Naive thymus-derived CD4-positive, alpha-beta T cell (primary cell): ENCODE measurements at regions of chr11 and their contacts with region 1.

Region 1: DNA sequence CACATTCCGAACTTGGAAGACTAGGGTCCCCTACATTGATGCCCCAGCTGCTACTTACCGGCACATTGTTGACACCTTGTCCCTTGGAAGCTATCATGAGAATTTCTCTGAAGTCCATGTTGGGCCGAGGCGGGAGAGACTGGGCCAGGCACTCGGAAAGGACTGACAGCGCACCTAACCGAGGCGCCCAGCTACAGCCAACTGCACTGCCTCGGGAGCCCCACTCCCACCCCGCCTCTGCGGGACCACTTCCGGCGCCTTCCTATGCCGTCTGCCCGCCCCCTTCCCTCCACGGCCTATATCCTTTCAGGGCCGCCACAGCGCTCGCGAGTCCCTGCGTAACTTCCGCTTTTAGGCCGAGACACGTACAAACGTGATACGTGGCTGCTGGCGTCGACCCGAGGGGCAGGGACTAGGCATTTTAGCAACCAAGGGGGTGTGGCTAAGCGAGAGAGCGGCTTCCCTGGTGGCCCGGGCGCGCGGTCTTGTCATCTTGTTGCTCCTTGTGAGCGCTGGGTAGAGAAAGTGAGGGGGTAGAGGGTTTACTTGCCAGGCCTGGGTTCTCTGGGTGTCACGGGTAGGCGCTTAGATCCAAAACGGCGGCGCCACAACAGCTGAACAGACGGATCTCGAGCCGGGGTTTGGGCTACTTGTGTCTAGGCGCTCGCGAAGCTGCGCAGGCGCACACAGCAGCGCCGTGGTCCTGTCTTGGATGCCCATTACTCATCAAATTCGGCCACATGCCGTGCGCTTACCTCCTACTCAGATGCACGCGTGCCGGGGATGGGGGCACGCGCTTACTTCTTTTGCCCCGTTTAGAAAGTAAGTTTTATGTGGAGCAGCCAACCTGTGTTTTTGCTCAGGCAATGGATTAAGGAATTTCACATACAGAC is at the start of gene SPTY2D1:
- DNase-seq: peak; percentile 88 to 99 (median 98)
- ATAC-seq: peak; percentile 97
- H3K4me3 ChIP-seq: peak within 1 kb of the TSS; percentile 98
- H3K4me3 Mint-ChIP-seq: peak within 1 kb of the TSS; percentile 83 to 99 (median 96)
- H3K27ac ChIP-seq: peak within 1 kb of the TSS; percentile 98
- H3K27ac Mint-ChIP-seq: peak within 1 kb of the TSS; percentile 95 to 100 (median 98)
- H3K4me1 ChIP-seq: peaks cover 10 to 17% of the 10 kb centered on the region in 2 donors
- H3K4me1 Mint-ChIP-seq: peaks cover 6 to 58% (median 32%) of the 10 kb centered on the region in 7 donors
- H3K27me3 ChIP-seq: no peaks in the 10 kb centered on the region
- H3K27me3 Mint-ChIP-seq: peaks cover 0 to 7% (median 0%) of the 10 kb centered on the region in 5 donors
- total RNA-seq, gene SPTY2D1: 26.0 to 37.4 (median 28.2) TPM

Region 2: DNA sequence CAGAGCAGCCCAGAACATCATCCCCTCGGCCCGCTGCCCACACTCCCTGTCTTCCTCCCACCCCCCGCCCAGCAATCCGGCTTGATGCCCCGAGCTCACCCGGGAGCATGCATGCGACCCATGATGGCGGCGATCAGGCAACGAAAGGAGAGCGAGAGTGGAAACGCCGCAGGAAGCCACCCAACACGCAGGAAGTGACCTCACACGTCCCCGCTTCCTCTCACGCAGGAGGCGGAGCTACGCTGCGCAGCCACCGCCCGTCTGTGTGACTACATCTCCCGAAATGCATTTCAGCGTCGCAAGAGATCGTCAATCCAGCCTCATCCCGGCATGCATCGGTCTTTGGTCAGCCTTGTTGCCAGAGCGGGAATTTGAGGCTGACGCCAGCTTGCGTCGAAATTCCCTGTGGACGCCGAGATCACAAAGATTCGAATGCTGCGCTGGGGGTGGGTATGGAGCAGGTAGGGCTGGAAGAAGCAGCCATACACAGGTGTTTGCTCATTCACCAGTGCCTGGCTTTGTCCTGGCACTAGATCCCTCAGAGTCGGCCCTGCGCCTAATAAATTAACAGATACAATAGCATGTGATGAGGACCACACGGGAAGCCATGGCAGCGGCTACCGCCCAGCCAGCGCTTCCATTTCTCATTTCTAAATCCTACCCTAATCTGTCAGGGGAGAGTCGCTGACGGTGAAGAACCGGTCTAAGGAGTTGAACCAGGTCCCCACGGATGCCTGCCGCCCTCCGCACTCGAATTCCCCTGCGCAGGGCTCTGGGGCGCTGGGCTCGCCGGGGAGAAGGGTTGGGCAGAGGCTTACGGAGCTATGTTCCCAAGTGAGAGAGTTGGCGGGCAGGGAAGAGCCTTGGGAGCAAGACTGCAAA is 1556.6 kb before region 1 on chr11 and contains the start of gene RPS13:
- CTCF ChIA-PET with region 1: no interaction called
- POLR2A ChIA-PET with region 1: no interaction called
- intact Hi-C with region 1: loop called in 1 of 2 experiments (anchors 5 kb)
- DNase-seq: peak; percentile 76 to 95 (median 93)
- ATAC-seq: peak; percentile 98
- H3K4me3 ChIP-seq: peak within 1 kb of the TSS; percentile 87
- H3K4me3 Mint-ChIP-seq: peak within 1 kb of the TSS; percentile 91 to 99 (median 98)
- H3K27ac ChIP-seq: peak within 1 kb of the TSS; percentile 91
- H3K27ac Mint-ChIP-seq: peak within 1 kb of the TSS; percentile 96 to 99 (median 99)
- H3K4me1 ChIP-seq: peaks cover 12 to 27% of the 10 kb centered on the region in 2 donors
- H3K4me1 Mint-ChIP-seq: peaks cover 25 to 60% (median 37%) of the 10 kb centered on the region in 7 donors
- H3K27me3 ChIP-seq: no peaks in the 10 kb centered on the region
- H3K27me3 Mint-ChIP-seq: no peaks in the 10 kb centered on the region
- total RNA-seq, gene RPS13: 1,062 to 2,591 (median 2,234) TPM

Region 3: DNA sequence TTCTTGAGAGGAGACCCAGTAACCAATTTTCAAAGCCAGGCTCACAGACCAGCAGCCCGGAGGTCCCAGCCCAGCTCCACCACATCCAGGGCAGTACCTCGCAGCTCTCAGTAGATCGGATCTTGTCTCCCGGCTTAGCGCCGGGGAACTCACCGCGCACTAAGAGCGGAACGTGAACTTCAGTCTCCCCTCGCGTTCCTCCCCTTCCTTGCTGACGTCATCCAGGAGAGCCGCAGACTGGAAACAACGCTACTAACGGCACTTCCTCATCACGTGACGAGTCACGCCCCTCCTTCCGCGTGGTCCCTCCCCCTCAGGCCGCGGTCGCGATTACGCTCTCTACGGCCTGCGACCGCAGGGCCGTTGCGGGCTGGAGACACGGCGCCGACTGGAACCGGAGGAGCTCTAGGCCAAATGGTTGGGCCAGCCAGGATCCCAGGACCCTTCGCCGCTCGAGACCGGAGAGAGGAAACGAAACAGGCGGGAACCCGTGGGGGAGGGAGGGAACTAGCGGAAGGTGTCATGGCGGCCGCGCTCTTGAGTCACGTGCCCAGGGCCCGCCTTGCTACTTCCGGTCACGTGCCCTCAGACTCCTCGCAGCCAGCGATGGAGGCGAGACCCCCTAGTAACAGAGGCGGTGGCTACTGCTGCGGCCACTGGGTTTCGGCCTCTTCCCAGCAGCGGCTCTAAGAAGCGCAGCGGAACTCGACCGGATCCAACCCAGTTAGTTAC is 312.2 kb before region 1 on chr11 and contains the starts of genes GTF2H1 and HPS5:
- CTCF ChIA-PET with region 1: no interaction called
- POLR2A ChIA-PET with region 1: interaction called, 15 read pairs
- intact Hi-C with region 1: loop called (anchors 1 kb)
- DNase-seq: peak; percentile 88 to 99 (median 98)
- ATAC-seq: peak; percentile 93
- H3K4me3 ChIP-seq: peak within 1 kb of the TSS; percentile 96
- H3K4me3 Mint-ChIP-seq: peak within 1 kb of the TSS; percentile 85 to 100 (median 94)
- H3K27ac ChIP-seq: peak within 1 kb of the TSS; percentile 97
- H3K27ac Mint-ChIP-seq: peak within 1 kb of the TSS; percentile 99 to 100 (median 100)
- H3K4me1 ChIP-seq: peaks cover 32 to 33% of the 10 kb centered on the region in 2 donors
- H3K4me1 Mint-ChIP-seq: peaks cover 53 to 91% (median 81%) of the 10 kb centered on the region in 7 donors
- H3K27me3 ChIP-seq: no peaks in the 10 kb centered on the region
- H3K27me3 Mint-ChIP-seq: peaks cover 0 to 2% (median 0%) of the 10 kb centered on the region in 5 donors
- total RNA-seq, gene GTF2H1: 26.3 to 63.2 (median 59.0) TPM
- total RNA-seq, gene HPS5: 13.0 to 22.3 (median 16.6) TPM

Region 4: GRCh38 chr11:18578975-18579598 is 55.3 kb before region 1 on chr11:
- CTCF ChIA-PET with region 1: interaction called, 3 read pairs
- POLR2A ChIA-PET with region 1: no interaction called
- intact Hi-C with region 1: loop called in 1 of 2 experiments (anchors 2 kb)
- DNase-seq: no peak
- ATAC-seq: peak; percentile 24
- H3K4me3 ChIP-seq: no peak overlapping the region
- H3K4me3 Mint-ChIP-seq: peak overlapping the region in 2 of 10 donors; percentile 29 to 67
- H3K27ac ChIP-seq: no peak overlapping the region
- H3K27ac Mint-ChIP-seq: peak overlapping the region in 1 of 9 donors; percentile 51
- H3K4me1 ChIP-seq: no peaks in the 10 kb centered on the region
- H3K4me1 Mint-ChIP-seq: peaks cover 0 to 40% (median 2%) of the 10 kb centered on the region in 7 donors
- H3K27me3 ChIP-seq: no peaks in the 10 kb centered on the region
- H3K27me3 Mint-ChIP-seq: no peaks in the 10 kb centered on the region

Region 5: DNA sequence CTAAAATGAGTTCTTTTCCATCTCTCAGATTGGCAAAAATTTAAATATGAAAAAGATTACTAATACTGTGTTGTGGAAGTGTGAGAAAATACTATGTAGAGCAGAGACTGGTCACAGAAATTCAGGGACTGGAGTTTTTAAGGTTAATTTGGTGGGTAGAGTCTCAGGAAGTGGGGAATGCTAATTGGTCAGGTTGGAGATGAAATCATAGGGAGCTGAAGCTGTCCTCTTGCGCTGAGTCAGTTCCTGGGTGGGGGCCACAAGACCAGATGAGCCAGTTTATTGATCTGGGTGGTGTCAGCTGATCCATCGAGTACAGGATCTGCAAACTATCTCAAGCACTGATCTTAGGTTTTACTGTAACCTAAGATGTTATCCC is 34.8 kb after region 1 on chr11:
- CTCF ChIA-PET with region 1: no interaction called
- POLR2A ChIA-PET with region 1: interaction called, 25 read pairs
- intact Hi-C with region 1: loop called in 1 of 2 experiments (anchors 1 kb)
- DNase-seq: no peak
- ATAC-seq: no peak
- H3K4me3 ChIP-seq: no peak overlapping the region
- H3K4me3 Mint-ChIP-seq: peak overlapping the region in 2 of 10 donors; percentile 1 to 28
- H3K27ac ChIP-seq: no peak overlapping the region
- H3K27ac Mint-ChIP-seq: peak overlapping the region in 8 of 9 donors; percentile 6 to 89 (median 54)
- H3K4me1 ChIP-seq: peaks cover 20 to 26% of the 10 kb centered on the region in 2 donors
- H3K4me1 Mint-ChIP-seq: peaks cover 34 to 74% (median 54%) of the 10 kb centered on the region in 7 donors
- H3K27me3 ChIP-seq: no peaks in the 10 kb centered on the region
- H3K27me3 Mint-ChIP-seq: peaks cover 0 to 17% (median 0%) of the 10 kb centered on the region in 5 donors

Region 6: DNA sequence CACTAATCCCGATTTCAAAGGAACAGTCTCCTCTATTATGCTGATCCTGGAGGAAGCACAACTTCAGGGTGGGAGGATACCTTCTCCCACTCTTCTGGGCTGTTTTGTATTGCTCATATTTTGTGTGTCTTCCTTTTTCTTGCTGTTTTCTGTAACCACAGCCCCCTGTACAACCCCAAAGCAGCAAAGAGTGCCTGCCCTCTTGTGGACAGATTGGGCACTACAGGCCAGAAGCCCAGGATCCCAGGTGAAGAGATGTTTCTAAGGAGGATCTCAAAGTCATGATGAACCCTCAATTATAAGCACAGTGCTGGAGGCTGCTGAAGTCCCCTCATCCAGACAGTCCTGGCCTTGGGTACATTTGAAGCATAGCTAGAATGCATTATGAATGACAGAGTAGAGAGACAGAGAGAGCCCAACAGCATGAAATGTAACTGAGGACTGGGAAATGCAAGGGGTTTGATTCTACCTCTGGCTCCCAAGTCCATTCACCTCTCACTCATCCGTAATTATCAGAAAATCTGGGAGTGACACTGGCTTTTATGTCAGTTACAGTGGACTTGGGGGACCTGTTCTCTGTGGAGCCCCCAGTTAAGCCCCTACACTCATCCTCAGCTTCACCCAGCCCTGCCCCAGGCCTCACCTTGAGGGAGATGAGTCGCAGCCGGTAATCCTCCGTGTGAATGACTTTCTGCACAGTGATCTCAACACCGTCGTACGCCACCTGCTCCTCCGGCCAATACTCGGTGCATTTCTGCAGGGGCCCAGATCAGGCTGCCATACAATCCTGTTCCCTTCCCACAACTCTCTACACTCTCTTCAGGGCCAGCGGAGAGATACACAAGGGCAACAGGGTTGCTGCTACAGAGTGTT is 97.8 kb after region 1 on chr11:
- CTCF ChIA-PET with region 1: no interaction called
- POLR2A ChIA-PET with region 1: interaction called, 4 read pairs
- intact Hi-C with region 1: loop called in 1 of 2 experiments (anchors 1 kb)
- DNase-seq: peak; percentile 44 to 81 (median 65)
- ATAC-seq: peak; percentile 79
- H3K4me3 ChIP-seq: no peak overlapping the region
- H3K4me3 Mint-ChIP-seq: no peak overlapping the region
- H3K27ac ChIP-seq: no peak overlapping the region
- H3K27ac Mint-ChIP-seq: peak overlapping the region in 1 of 9 donors; percentile 32
- H3K4me1 ChIP-seq: peaks cover 5 to 6% of the 10 kb centered on the region in 2 donors
- H3K4me1 Mint-ChIP-seq: peaks cover 4 to 15% (median 13%) of the 10 kb centered on the region in 7 donors
- H3K27me3 ChIP-seq: no peaks in the 10 kb centered on the region
- H3K27me3 Mint-ChIP-seq: peaks cover 0 to 9% (median 0%) of the 10 kb centered on the region in 5 donors